HepG2 (cell line): ENCODE measurements at regions of chr6 and their contacts with region 1.

Region 1: GRCh38 chr6:165884813-165885765 is 222.0 kb upstream of the PDE10A start:
- DNase-seq: peak; percentile 63
- ATAC-seq: peak; percentile 98
- H3K4me3 ChIP-seq: no peak overlapping the region
- H3K27ac ChIP-seq: no peak overlapping the region
- H3K4me1 ChIP-seq: no peaks in the 10 kb centered on the region
- H3K27me3 ChIP-seq: no peaks in the 10 kb centered on the region; a peak in 2 of 5 replicates
- CTCF ChIP-seq: peak; percentile 93
- EP300 ChIP-seq: no peak
- POLR2A ChIP-seq: no peak
- RAD21 ChIP-seq: peak; percentile 88

Region 2: DNA sequence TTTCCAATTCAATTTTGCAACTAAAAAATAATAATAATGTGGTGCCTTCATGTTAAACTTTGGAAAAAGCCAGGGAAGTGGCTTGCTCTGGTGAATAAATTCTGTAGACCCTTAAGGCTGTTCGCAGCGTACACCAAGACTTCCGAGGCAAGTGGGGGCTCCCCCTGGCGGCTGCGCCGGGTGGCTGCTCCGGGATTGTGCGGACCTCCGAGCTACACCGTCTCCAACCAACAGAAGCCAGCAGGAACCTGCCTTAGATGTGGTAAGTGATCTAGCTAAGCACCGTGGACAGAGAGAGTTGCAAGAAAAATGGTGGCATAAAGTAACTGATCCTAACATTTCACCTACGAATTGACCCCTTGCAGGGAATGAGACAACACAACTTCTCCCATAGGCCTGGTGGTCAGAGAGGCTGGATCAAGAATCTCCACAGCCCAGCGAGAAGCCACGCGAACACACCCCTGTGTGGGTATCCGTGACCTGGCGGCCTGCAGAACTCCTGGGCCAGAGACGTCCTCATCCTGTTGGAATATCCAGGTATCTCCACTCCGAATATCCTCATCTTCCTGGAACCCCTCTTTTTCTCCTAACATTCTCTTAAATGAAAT is 212.9 kb after region 1 on chr6:
- CTCF ChIA-PET with region 1: interaction called, 17 read pairs
- POLR2A ChIA-PET with region 1: no interaction called
- in situ Hi-C with region 1: no loop called
- intact Hi-C with region 1: loop called (anchors 1 kb)
- DNase-seq: peak; percentile 29
- ATAC-seq: peak; percentile 98
- H3K4me3 ChIP-seq: no peak overlapping the region
- H3K27ac ChIP-seq: no peak overlapping the region
- H3K4me1 ChIP-seq: no peaks in the 10 kb centered on the region
- H3K27me3 ChIP-seq: no peaks in the 10 kb centered on the region
- CTCF ChIP-seq: peak; percentile 72
- EP300 ChIP-seq: no peak
- POLR2A ChIP-seq: no peak
- RAD21 ChIP-seq: peak; percentile 68; the same call in 1 of the 2 replicates

Region 3: DNA sequence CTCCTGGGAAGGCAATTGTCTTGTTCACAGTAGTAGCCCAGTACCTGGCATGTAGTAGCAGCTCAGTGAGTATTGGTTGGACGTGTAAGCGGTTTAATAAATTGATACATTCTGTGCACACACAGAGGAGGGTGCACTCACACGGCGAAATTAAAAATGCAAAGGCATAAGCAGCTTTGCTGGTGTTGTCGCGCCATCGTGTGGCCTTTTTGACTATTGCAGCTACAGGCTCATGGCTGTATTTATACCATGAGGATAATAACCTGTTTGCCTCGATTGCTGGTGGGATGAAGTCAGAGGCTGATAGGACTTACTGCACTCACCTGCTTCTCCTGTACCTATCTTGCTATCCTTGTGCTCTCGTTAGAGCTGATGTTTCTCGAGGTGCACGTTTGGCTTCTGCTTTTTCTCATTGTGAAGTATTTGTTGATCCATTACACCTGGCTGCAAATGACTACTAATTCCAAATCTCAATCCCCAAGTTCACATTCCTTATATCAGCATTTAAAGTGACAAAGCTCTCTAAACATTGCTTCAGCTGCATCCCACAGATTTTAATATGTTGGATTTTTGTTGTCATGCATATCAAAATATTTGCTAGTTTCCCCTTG is 221.1 kb after region 1 on chr6:
- CTCF ChIA-PET with region 1: interaction called, 35 read pairs
- POLR2A ChIA-PET with region 1: no interaction called
- in situ Hi-C with region 1: loop called (anchors 5 kb)
- intact Hi-C with region 1: loop called (anchors 1 kb)
- DNase-seq: peak; percentile 50
- ATAC-seq: peak; percentile 91
- H3K4me3 ChIP-seq: no peak overlapping the region
- H3K27ac ChIP-seq: no peak overlapping the region
- H3K4me1 ChIP-seq: no peaks in the 10 kb centered on the region
- H3K27me3 ChIP-seq: peaks cover 0 to 5% of the 10 kb centered on the region in 2 experiments; a peak in 1 of 5 replicates
- CTCF ChIP-seq: peak; percentile 96
- EP300 ChIP-seq: no peak
- POLR2A ChIP-seq: no peak
- RAD21 ChIP-seq: peak; percentile 80